CD4-positive, alpha-beta memory T cell (primary cell): ENCODE measurements at regions of chr11 and their contacts with region 1.

Region 1: DNA sequence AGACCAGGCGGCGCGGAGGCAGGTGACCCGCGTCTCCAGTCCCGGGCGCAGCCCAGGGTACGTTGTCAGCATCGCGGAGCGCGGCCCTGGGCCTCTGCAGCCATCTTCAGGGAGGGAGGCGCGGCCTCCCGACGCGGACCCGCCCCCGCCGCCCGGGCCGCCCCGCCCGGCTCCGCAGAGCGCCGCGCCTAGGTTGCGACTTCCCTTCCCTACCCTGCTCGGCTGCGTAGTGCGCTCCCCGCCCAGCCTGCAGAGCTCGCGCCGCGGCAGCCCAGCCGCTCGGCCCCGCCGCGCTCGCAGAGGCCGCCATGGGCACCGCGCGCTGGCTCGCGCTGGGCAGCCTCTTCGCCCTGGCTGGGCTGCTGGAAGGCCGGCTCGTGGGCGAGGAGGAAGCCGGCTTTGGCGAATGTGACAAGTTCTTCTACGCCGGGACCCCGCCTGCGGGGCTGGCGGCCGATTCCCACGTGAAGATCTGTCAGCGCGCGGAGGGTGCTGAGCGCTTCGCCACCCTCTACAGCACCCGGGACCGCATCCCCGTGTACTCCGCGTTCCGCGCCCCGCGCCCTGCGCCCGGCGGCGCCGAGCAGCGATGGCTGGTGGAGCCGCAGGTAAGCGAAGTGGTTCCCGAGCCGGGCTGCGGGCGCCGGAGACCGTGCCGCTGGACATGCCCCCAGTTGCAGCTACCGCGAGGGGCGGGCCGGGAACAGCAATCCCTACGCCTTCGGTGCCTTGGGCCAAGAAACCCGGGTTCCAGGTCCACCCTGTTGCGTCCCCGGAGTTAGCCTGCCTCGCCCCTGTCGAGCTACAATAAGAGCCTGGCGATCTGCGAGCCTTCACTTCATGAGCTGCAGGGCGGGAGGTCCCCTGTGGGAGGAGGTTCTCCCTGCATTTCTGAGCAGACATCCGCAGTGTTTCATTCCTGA is at the start of gene ENDOD1:
- DNase-seq: peak; percentile 86 to 89 (median 87)
- H3K4me3 ChIP-seq: peak within 1 kb of the TSS; percentile 45 to 76
- H3K4me3 Mint-ChIP-seq: peak within 1 kb of the TSS; percentile 91 to 96 (median 92)
- H3K27ac ChIP-seq: peak within 1 kb of the TSS; percentile 67
- H3K27ac Mint-ChIP-seq: peak within 1 kb of the TSS; percentile 92 to 99 (median 98)
- H3K4me1 ChIP-seq: peaks cover 43% of the 10 kb centered on the region
- H3K4me1 Mint-ChIP-seq: peaks cover 36 to 55% (median 46%) of the 10 kb centered on the region in 4 donors
- H3K27me3 ChIP-seq: no peaks in the 10 kb centered on the region
- H3K27me3 Mint-ChIP-seq: no peaks in the 10 kb centered on the region
- total RNA-seq, gene ENDOD1: 12.8 to 13.3 TPM

Region 2: GRCh38 chr11:94511932-94512781 is 577.7 kb before region 1 on chr11 and contains the start of gene C11orf97:
- CTCF ChIA-PET with region 1: no interaction called
- POLR2A ChIA-PET with region 1: no interaction called
- intact Hi-C with region 1: no loop called
- DNase-seq: peak; percentile 36 to 46 (median 41)
- H3K4me3 ChIP-seq: peak within 1 kb of the TSS in 1 of 2 donors; percentile 51
- H3K4me3 Mint-ChIP-seq: peak within 1 kb of the TSS; percentile 73 to 85 (median 80)
- H3K27ac ChIP-seq: no peak within 1 kb of the TSS
- H3K27ac Mint-ChIP-seq: peak within 1 kb of the TSS in 3 of 7 donors; percentile 19 to 73 (median 47)
- H3K4me1 ChIP-seq: peaks cover 13% of the 10 kb centered on the region
- H3K4me1 Mint-ChIP-seq: peaks cover 10 to 17% (median 13%) of the 10 kb centered on the region in 4 donors
- H3K27me3 ChIP-seq: no peaks in the 10 kb centered on the region
- H3K27me3 Mint-ChIP-seq: peaks cover 9 to 12% of the 10 kb centered on the region in 2 donors
- total RNA-seq, gene C11orf97: not detected

Region 3: DNA sequence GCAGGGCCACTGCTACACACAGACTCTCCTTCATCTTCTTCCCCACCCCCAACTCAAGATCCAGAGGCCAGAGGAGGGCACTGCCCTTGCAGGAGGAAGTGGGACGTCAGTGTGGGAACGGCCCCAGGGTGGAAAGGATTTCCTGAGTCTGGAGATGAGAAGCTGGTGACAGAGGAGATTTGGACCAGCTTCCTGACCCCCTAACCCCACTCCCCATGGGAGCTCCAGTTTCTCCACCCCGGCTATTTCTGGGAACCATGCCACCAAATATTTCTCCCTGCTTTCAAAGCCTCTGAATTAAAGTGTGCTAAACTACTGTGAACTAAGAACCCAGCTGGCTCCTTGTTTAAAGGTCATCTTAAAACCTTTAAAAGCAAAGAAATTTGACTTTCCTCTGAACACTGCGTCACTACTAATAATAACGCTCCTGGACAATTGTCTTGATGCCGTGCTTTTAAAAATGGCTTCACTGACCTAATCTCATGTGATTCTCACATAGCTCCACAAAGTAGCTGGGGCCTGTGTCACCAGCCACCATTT is 163.1 kb before region 1 on chr11:
- CTCF ChIA-PET with region 1: no interaction called
- POLR2A ChIA-PET with region 1: interaction called, 12 read pairs
- intact Hi-C with region 1: no loop called
- DNase-seq: no peak
- H3K4me3 ChIP-seq: no peak overlapping the region
- H3K4me3 Mint-ChIP-seq: peak overlapping the region in 1 of 8 donors; percentile 29
- H3K27ac ChIP-seq: no peak overlapping the region
- H3K27ac Mint-ChIP-seq: peak overlapping the region in 2 of 7 donors; percentile 43 to 52
- H3K4me1 ChIP-seq: peaks cover 50% of the 10 kb centered on the region
- H3K4me1 Mint-ChIP-seq: peaks cover 35 to 67% (median 41%) of the 10 kb centered on the region in 4 donors
- H3K27me3 ChIP-seq: no peaks in the 10 kb centered on the region
- H3K27me3 Mint-ChIP-seq: peaks cover 0 to 1% of the 10 kb centered on the region in 2 donors

Region 4: DNA sequence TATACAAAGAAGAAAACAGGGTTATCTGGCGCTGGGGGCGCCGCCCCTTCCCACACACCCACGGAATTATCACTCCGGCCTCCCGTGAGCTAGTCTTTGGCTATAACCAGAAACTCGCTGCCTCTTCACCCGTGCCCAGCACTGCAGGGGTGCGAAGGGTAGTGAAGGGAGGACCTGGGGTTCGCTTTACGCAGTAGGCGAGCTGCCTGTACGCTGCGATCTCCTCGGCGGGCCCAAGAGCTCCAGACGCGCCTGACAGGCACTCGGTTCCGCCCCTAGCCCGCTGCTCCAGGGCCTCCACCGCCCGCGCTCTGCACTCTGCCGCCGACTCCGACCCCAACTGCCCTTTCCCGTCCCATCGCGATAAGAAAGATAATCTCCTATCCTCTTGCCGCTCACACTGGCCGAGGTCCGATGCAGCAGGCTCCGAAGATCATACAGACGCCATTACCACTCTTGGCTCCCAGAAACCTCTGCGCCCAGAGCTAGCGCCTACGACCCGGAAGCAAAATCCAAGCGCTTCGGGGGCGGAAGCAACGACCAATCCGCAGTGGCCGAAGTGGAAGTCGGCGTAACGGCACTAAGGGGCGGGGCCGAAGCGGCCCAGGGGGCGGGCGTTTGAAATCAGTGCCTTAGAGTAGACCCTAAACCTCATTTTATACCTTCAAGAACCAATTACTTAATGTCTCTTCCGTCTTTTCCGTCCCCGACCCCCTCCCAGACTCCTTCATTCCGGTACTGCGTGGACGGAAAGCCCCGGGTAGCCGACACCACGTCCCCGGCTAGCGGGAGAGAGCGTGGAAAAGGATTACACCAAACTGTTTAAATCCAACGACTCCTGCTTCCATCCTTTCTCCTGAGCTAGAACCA is 116.5 kb before region 1 on chr11 and contains the starts of genes CWC15 and KDM4D:
- CTCF ChIA-PET with region 1: interaction called, 4 read pairs
- POLR2A ChIA-PET with region 1: interaction called, 32 read pairs
- intact Hi-C with region 1: loop called (anchors 1 kb)
- DNase-seq: peak; percentile 91 to 96 (median 93)
- H3K4me3 ChIP-seq: peak within 1 kb of the TSS; percentile 61 to 95
- H3K4me3 Mint-ChIP-seq: peak within 1 kb of the TSS; percentile 94 to 100 (median 98)
- H3K27ac ChIP-seq: peak within 1 kb of the TSS; percentile 92
- H3K27ac Mint-ChIP-seq: peak within 1 kb of the TSS; percentile 84 to 100 (median 98)
- H3K4me1 ChIP-seq: peaks cover 16% of the 10 kb centered on the region
- H3K4me1 Mint-ChIP-seq: peaks cover 14 to 35% (median 25%) of the 10 kb centered on the region in 4 donors
- H3K27me3 ChIP-seq: no peaks in the 10 kb centered on the region
- H3K27me3 Mint-ChIP-seq: no peaks in the 10 kb centered on the region
- total RNA-seq, gene CWC15: 62.7 to 69.4 TPM
- total RNA-seq, gene KDM4D: 0.32 to 0.39 TPM

Region 5: DNA sequence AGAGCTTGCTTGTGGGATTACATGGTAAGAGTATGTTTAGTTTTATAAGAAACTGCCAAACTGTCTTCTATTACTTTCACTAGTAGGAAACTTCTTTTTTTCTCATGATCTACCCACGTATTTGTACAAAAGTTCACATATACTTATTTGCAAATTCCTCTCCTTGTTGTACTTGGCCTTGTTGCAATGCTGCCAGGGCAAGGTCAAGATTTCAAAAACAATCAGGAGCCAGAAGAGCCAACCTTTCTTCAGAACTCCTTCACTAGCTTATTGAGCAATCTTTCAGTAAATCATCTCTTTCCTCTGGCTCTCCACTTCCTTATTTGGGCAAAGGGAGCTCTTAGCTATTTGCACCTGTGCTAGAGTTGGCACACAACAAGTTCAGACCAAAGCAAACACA is 13.5 kb before region 1 on chr11:
- CTCF ChIA-PET with region 1: interaction called, 124 read pairs
- POLR2A ChIA-PET with region 1: interaction called, 376 read pairs
- intact Hi-C with region 1: no loop called
- DNase-seq: no peak
- H3K4me3 ChIP-seq: no peak overlapping the region
- H3K4me3 Mint-ChIP-seq: no peak overlapping the region
- H3K27ac ChIP-seq: no peak overlapping the region
- H3K27ac Mint-ChIP-seq: no peak overlapping the region
- H3K4me1 ChIP-seq: peaks cover under 1% of the 10 kb centered on the region
- H3K4me1 Mint-ChIP-seq: peaks cover 5 to 13% (median 12%) of the 10 kb centered on the region in 4 donors
- H3K27me3 ChIP-seq: no peaks in the 10 kb centered on the region
- H3K27me3 Mint-ChIP-seq: peaks cover 0 to 5% of the 10 kb centered on the region in 2 donors

Region 6: DNA sequence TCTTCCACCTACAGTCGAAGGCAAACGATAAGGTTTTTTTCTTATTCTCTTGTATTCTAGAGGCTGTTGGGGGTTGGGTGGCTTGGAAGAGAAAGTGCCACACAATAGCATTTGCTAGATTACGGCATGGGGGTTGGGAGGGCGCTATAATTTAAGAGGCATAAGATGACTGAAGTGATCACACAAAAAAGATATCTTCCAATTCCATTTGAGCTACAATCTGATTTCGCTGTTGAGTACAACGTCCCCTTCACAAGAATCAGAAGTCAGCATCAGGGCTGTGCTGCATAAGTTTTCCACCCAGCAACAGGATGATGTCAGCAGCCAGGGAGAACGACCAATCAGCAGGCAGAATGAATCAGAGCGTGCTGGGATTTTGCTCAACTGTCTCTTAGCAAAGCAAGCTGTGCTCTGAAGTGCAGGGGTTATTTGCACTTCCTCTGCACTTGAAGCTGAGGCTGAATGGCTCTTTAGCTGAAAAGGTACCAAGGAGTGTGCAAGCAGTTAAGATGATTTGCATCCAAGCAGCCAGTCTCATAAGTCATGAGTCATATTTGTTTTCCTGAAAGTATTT is 164.3 kb after region 1 on chr11:
- CTCF ChIA-PET with region 1: no interaction called
- POLR2A ChIA-PET with region 1: interaction called, 3 read pairs
- intact Hi-C with region 1: loop called (anchors 5 kb)
- DNase-seq: peak; percentile 79 to 88 (median 81)
- H3K4me3 ChIP-seq: peak overlapping the region; percentile 26 to 36
- H3K4me3 Mint-ChIP-seq: peak overlapping the region; percentile 88 to 96 (median 92)
- H3K27ac ChIP-seq: peak overlapping the region; percentile 49
- H3K27ac Mint-ChIP-seq: peak overlapping the region; percentile 91 to 99 (median 95)
- H3K4me1 ChIP-seq: peaks cover 38% of the 10 kb centered on the region
- H3K4me1 Mint-ChIP-seq: peaks cover 23 to 42% (median 36%) of the 10 kb centered on the region in 4 donors
- H3K27me3 ChIP-seq: no peaks in the 10 kb centered on the region
- H3K27me3 Mint-ChIP-seq: peaks cover 0 to 2% of the 10 kb centered on the region in 2 donors